ENCODE measurements at regions of chr1 and their contacts with region 1.

Region 1: GRCh38 chr1:42035830-42036604 is 117.2 kb upstream of the GUCA2B start:
- DNase-seq: peak; percentile 97 to 99
- ATAC-seq: peak; percentile 93 to 98 (median 94)
- H3K4me3 ChIP-seq: peak overlapping the region; percentile 49
- H3K4me3 Mint-ChIP-seq: peak overlapping the region; percentile 84
- H3K27ac ChIP-seq: peak overlapping the region; percentile 48
- H3K27ac Mint-ChIP-seq: peak overlapping the region; percentile 29 to 82
- H3K4me1 ChIP-seq: peaks cover 22% of the 10 kb centered on the region
- H3K4me1 Mint-ChIP-seq: peaks cover 40 to 41% of the 10 kb centered on the region in 2 donors
- H3K27me3 ChIP-seq: no peaks in the 10 kb centered on the region
- H3K27me3 Mint-ChIP-seq: no peaks in the 10 kb centered on the region
- CTCF ChIP-seq: no peak

Region 2: DNA sequence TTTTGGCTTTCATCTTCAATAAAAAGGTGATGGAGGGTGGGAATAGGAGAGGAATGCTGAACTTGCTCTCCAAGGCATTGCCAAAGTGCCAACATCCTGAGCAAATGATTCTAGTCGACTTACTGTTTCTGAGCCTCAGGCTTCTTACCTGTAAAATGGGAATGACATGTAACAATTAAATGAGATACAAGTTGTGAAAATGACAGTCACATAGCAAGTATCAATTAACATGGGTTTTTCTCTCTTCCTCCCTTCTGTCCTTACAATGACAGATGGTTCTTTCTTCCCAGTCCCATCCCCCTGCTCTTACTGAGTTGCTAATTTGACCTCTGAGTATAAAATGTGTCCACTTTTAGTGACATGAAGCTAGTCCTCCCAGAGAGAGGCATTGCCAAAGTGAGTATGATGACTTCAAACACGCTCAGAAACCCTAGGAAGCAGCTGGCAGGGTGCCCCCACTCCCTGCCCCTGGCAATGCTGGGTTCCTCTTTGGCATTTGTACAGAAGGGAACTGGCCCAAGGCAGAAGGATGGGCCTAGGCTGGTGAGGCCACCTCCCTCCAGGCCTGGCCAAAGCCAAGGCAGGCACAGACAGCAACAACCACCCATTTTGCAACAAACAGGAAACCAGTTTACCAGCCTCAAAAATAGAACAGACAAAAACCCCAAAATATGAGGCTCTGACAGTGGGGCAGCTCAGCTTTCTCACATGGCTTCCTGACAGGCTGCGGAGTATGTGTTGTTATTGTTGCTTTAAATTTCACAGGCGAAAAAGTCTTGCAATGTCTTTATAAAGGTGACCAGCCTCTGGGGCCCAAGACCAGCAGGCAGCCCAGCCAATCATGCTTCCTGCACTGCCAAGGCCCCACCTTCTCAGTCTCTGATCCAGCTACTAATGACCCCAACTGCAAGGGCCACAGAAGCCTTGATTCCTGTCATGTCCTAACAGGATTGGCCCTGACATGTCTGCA is 233.2 kb before region 1 on chr1:
- intact Hi-C with region 1: loop called (anchors 10 kb)
- DNase-seq: peak; percentile 31 to 71
- ATAC-seq: peak; percentile 65 to 86 (median 83)
- H3K4me3 ChIP-seq: no peak overlapping the region
- H3K4me3 Mint-ChIP-seq: peak overlapping the region; percentile 85
- H3K27ac ChIP-seq: peak overlapping the region; percentile 89
- H3K27ac Mint-ChIP-seq: peak overlapping the region; percentile 91 to 99
- H3K4me1 ChIP-seq: peaks cover 89% of the 10 kb centered on the region
- H3K4me1 Mint-ChIP-seq: peaks cover 81 to 87% of the 10 kb centered on the region in 2 donors
- H3K27me3 ChIP-seq: no peaks in the 10 kb centered on the region
- H3K27me3 Mint-ChIP-seq: no peaks in the 10 kb centered on the region
- CTCF ChIP-seq: no peak

Region 3: DNA sequence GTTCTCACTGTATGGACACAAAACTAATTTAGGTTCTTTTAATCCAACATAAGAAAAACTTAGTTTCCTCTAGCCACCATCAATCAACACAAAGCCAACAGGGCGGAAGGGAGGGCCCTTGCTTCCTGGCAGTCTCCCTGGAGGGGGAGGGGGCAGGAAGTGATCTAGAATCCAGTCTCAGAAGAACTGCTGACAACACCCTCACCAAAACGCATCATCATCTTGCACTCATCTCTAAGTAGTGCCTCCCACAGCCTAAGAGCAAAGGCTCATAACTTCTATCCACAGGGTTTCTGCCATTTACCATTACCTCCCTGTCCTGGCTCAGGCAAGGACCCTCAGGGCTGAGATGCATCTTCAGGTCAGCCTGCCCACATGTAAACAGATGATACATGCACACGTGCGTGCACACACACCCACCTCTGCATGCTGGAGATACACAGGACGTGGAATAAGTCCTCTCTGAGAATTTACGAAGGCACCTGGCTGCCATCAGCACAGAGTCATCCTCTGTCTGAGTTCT is 137.8 kb before region 1 on chr1:
- intact Hi-C with region 1: loop called (anchors 2 kb)
- DNase-seq: peak; percentile 51 to 88
- ATAC-seq: peak; percentile 86 to 92 (median 88)
- H3K4me3 ChIP-seq: no peak overlapping the region
- H3K4me3 Mint-ChIP-seq: peak overlapping the region; percentile 71
- H3K27ac ChIP-seq: peak overlapping the region; percentile 84
- H3K27ac Mint-ChIP-seq: peak overlapping the region; percentile 90 to 93
- H3K4me1 ChIP-seq: peaks cover 91% of the 10 kb centered on the region
- H3K4me1 Mint-ChIP-seq: peaks cover 92 to 93% of the 10 kb centered on the region in 2 donors
- H3K27me3 ChIP-seq: no peaks in the 10 kb centered on the region
- H3K27me3 Mint-ChIP-seq: no peaks in the 10 kb centered on the region
- CTCF ChIP-seq: no peak

Region 4: DNA sequence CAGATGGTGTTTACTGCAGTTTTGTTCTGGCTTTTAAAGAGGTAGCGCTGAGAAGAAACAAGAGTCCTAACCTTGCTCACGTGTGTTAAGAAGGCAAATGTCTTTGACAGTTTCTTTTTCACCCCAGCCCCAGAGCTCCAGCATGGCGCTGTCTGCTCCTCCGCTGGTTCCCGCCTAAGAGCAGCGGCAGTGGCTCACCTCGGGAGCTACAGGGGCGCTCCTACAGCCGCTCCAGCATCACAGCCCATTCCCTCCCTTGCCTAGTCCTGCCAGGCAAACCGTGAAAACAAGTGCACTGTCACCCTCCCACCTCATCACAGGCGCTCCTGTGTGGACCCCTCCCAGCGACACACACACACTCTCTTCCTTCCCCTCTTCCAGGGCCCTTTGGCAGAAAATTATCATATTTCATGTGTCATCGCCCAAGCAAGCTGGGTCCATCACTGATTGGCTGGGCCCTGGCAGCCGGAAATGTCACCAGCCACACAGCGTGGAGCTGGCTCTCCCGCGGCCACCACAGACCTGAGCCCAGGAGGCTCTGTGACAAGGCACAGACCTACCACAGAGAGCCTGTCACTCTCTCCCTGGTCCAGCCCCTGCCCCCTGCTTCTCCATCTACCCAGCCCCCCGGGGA is 116.1 kb before region 1 on chr1:
- intact Hi-C with region 1: loop called (anchors 5 kb)
- DNase-seq: peak; percentile 73 to 88
- ATAC-seq: peak; percentile 74 to 81 (median 78)
- H3K4me3 ChIP-seq: peak overlapping the region; percentile 47
- H3K4me3 Mint-ChIP-seq: peak overlapping the region; percentile 94
- H3K27ac ChIP-seq: peak overlapping the region; percentile 80
- H3K27ac Mint-ChIP-seq: peak overlapping the region; percentile 93 to 95
- H3K4me1 ChIP-seq: peaks cover 48% of the 10 kb centered on the region
- H3K4me1 Mint-ChIP-seq: peaks cover 69 to 71% of the 10 kb centered on the region in 2 donors
- H3K27me3 ChIP-seq: no peaks in the 10 kb centered on the region
- H3K27me3 Mint-ChIP-seq: no peaks in the 10 kb centered on the region
- CTCF ChIP-seq: no peak

Region 5: GRCh38 chr1:41941381-41941780 is 94.6 kb before region 1 on chr1:
- intact Hi-C with region 1: no loop called
- DNase-seq: no peak
- ATAC-seq: no peak
- H3K4me3 ChIP-seq: no peak overlapping the region
- H3K4me3 Mint-ChIP-seq: no peak overlapping the region
- H3K27ac ChIP-seq: no peak overlapping the region
- H3K27ac Mint-ChIP-seq: peak overlapping the region in 1 of 2 donors; percentile 4
- H3K4me1 ChIP-seq: no peaks in the 10 kb centered on the region
- H3K4me1 Mint-ChIP-seq: peaks cover 28 to 36% of the 10 kb centered on the region in 2 donors
- H3K27me3 ChIP-seq: no peaks in the 10 kb centered on the region
- H3K27me3 Mint-ChIP-seq: no peaks in the 10 kb centered on the region
- CTCF ChIP-seq: no peak

Region 6: DNA sequence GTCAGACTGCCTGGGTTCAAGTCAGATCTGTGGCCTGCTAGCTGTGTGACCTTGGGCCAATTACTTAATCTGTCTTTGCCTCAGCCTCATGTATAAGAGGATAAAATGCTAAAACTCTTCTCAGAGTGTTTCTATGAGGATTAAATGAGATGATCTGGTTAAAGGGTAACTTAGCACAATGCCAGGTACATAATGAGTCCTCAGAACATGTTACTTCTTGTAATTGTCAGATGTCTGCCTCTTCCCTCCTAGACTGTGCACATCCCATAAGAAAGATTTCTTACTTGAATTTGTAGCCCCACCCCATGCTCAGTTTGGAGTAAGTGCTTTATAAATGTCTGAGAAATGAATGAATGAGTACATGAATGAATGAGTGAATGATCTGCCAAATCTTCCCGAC is 82.7 kb before region 1 on chr1:
- intact Hi-C with region 1: no loop called
- DNase-seq: no peak
- ATAC-seq: no peak
- H3K4me3 ChIP-seq: no peak overlapping the region
- H3K4me3 Mint-ChIP-seq: no peak overlapping the region
- H3K27ac ChIP-seq: no peak overlapping the region
- H3K27ac Mint-ChIP-seq: no peak overlapping the region
- H3K4me1 ChIP-seq: peaks cover 3% of the 10 kb centered on the region
- H3K4me1 Mint-ChIP-seq: peaks cover 44 to 53% of the 10 kb centered on the region in 2 donors
- H3K27me3 ChIP-seq: no peaks in the 10 kb centered on the region
- H3K27me3 Mint-ChIP-seq: no peaks in the 10 kb centered on the region
- CTCF ChIP-seq: no peak